HCT116 (cell line): ENCODE measurements at regions of chr4 and their contacts with region 1.

Region 1: GRCh38 chr4:10535912-10536311 is 78.7 kb upstream of the ZNF518B start:
- DNase-seq: no peak
- ATAC-seq: no peak
- H3K4me3 ChIP-seq: no peak overlapping the region
- H3K27ac ChIP-seq: no peak overlapping the region
- H3K4me1 ChIP-seq: peaks cover 11 to 23% of the 10 kb centered on the region in 2 experiments; a peak in 2 of 4 replicates
- H3K27me3 ChIP-seq: no peaks in the 10 kb centered on the region
- CTCF ChIP-seq: no peak
- POLR2A ChIP-seq: no peak
- RAD21 ChIP-seq: no peak

Region 2: GRCh38 chr4:10018818-10019461 is 517.0 kb before region 1 on chr4:
- CTCF ChIA-PET with region 1: no interaction called
- POLR2A ChIA-PET with region 1: no interaction called
- RAD21 ChIA-PET with region 1: no interaction called
- intact Hi-C with region 1: loop called (anchors 5 kb)
- DNase-seq: peak; percentile 88
- ATAC-seq: peak; percentile 98
- H3K4me3 ChIP-seq: peak overlapping the region; percentile 49 to 55
- H3K27ac ChIP-seq: peak overlapping the region; percentile 53
- H3K4me1 ChIP-seq: peaks cover 6 to 18% of the 10 kb centered on the region in 2 experiments; a peak in 3 of 4 replicates
- H3K27me3 ChIP-seq: no peaks in the 10 kb centered on the region
- CTCF ChIP-seq: peak in 2 of 3 experiments; percentile 99 to 100; a peak in 4 of 6 replicates
- POLR2A ChIP-seq: peak; percentile 62
- RAD21 ChIP-seq: no peak

Region 3: GRCh38 chr4:10157478-10158332 is 378.2 kb before region 1 on chr4:
- CTCF ChIA-PET with region 1: interaction called, 18 read pairs
- POLR2A ChIA-PET with region 1: no interaction called
- RAD21 ChIA-PET with region 1: interaction called in 1 of 2 experiments, 3 read pairs
- intact Hi-C with region 1: loop called (anchors 2 kb)
- DNase-seq: peak; percentile 73
- ATAC-seq: peak; percentile 93
- H3K4me3 ChIP-seq: no peak overlapping the region
- H3K27ac ChIP-seq: no peak overlapping the region
- H3K4me1 ChIP-seq: peaks cover 3 to 8% of the 10 kb centered on the region in 2 experiments; a peak in 2 of 4 replicates
- H3K27me3 ChIP-seq: peaks cover 9% of the 10 kb centered on the region; the same call in 1 of the 2 replicates
- CTCF ChIP-seq: peak; percentile 83 to 87 (median 86)
- POLR2A ChIP-seq: no peak
- RAD21 ChIP-seq: peak; percentile 85

Region 4: DNA sequence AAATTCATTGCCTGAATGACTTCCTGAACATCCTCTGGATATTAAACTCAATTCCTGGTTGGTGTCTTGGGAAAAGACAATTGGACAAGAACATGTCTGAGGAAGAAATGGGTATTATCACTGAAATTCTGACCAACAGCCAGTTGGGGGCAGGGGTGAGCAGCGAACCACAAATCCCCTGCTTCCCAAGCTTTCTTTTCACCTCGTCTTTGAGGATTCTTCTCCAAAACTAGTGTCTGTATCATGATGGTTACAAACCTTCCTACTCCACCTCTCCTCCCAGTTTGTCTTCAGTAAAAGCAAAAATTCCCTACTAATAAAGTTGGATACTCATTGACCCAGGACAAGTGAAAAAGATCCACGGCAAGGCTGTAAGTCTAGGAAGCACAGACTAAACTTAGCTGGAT is 371.0 kb before region 1 on chr4:
- CTCF ChIA-PET with region 1: interaction called, 19 read pairs
- POLR2A ChIA-PET with region 1: no interaction called
- RAD21 ChIA-PET with region 1: no interaction called
- intact Hi-C with region 1: no loop called
- DNase-seq: peak; percentile 44
- ATAC-seq: peak; percentile 79
- H3K4me3 ChIP-seq: no peak overlapping the region
- H3K27ac ChIP-seq: no peak overlapping the region
- H3K4me1 ChIP-seq: no peaks in the 10 kb centered on the region
- H3K27me3 ChIP-seq: no peaks in the 10 kb centered on the region
- CTCF ChIP-seq: peak; percentile 61 to 73 (median 71); a peak in 5 of 6 replicates
- POLR2A ChIP-seq: no peak
- RAD21 ChIP-seq: peak; percentile 70